Activated CD4-positive, alpha-beta memory T cell treated with anti-CD3 and anti-CD28 coated beads, Interleukin-2, amount 10 ng/mL, durations not matched to agents 7 days and 5 days (primary cell): ENCODE measurements at regions of chr6 and their contacts with region 1.

Region 1: GRCh38 chr6:25138237-25139125 is 140.7 kb upstream of the CARMIL1 start:
- DNase-seq: peak; percentile 81
- H3K4me3 Mint-ChIP-seq: peak overlapping the region; percentile 83
- H3K27ac Mint-ChIP-seq: peak overlapping the region; percentile 96
- H3K4me1 Mint-ChIP-seq: peaks cover 38% of the 10 kb centered on the region
- H3K27me3 Mint-ChIP-seq: no peaks in the 10 kb centered on the region

Region 2: GRCh38 chr6:25035527-25036435 is 102.7 kb before region 1 on chr6:
- CTCF ChIA-PET with region 1: no interaction called
- POLR2A ChIA-PET with region 1: interaction called, 13 read pairs
- DNase-seq: peak; percentile 45
- H3K4me3 Mint-ChIP-seq: peak overlapping the region; percentile 95
- H3K27ac Mint-ChIP-seq: peak overlapping the region; percentile 95
- H3K4me1 Mint-ChIP-seq: peaks cover 69% of the 10 kb centered on the region
- H3K27me3 Mint-ChIP-seq: no peaks in the 10 kb centered on the region

Region 3: DNA sequence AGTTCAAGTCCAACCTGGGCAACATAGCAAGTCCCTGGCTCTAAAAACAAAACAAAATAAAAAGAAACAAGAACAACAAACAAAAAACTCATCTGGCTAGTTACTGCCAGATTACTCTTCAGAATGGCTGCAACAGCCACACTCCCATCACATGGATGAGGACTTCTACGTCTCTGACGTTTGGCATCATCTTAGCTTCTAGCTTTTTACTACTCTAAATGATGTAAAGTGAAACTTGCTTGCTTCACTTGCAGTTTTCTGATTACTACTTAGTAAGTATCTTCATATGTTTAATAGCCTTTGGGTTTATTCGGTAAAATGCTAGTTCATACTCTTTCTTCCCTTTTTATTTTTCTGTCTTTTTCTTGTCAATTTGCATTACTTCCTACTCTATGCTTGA is 20.4 kb before region 1 on chr6:
- CTCF ChIA-PET with region 1: no interaction called
- POLR2A ChIA-PET with region 1: interaction called, 14 read pairs
- DNase-seq: no peak
- H3K4me3 Mint-ChIP-seq: no peak overlapping the region
- H3K27ac Mint-ChIP-seq: peak overlapping the region; percentile 10
- H3K4me1 Mint-ChIP-seq: peaks cover 57% of the 10 kb centered on the region
- H3K27me3 Mint-ChIP-seq: no peaks in the 10 kb centered on the region

Region 4: DNA sequence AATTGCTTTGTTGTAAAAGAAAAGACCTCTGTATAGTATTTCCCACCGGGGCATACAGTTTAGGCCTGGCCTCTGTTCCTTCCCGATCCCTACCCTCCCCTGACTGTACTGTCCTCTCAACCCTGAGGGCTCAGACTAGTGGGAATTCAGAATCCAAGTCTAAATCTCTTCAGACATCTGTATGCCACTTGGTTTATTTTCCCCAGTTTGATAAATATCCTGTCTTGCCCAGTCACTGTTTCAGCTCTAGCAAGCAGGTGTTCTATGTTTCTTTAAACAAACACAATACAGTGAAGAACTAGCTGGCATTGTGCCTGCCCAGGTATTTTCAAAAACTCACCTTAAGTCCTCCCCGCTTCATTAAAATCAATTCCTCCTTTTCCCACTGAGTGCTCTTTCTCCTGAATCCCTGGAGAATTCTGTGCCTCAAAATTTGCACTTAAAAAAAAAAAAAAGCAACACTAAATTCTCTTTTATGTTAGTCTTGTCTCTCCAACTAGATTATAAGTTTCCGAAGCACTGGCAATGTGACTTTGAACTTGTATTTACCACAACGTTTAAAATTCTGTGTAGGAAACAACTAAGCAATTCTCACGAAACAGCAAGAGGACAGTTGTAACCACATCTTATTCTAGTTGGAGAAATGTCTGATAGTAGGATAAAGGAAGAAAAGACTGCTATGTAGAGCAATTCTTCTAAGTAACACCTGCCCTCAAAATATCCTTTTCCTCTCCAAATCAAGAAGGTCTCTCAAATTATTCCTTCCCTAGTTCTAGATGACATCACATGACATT is 28.7 kb after region 1 on chr6:
- CTCF ChIA-PET with region 1: no interaction called
- POLR2A ChIA-PET with region 1: interaction called, 18 read pairs
- DNase-seq: no peak
- H3K4me3 Mint-ChIP-seq: peak overlapping the region; percentile 55
- H3K27ac Mint-ChIP-seq: peak overlapping the region; percentile 75
- H3K4me1 Mint-ChIP-seq: peaks cover 58% of the 10 kb centered on the region
- H3K27me3 Mint-ChIP-seq: no peaks in the 10 kb centered on the region

Region 5: DNA sequence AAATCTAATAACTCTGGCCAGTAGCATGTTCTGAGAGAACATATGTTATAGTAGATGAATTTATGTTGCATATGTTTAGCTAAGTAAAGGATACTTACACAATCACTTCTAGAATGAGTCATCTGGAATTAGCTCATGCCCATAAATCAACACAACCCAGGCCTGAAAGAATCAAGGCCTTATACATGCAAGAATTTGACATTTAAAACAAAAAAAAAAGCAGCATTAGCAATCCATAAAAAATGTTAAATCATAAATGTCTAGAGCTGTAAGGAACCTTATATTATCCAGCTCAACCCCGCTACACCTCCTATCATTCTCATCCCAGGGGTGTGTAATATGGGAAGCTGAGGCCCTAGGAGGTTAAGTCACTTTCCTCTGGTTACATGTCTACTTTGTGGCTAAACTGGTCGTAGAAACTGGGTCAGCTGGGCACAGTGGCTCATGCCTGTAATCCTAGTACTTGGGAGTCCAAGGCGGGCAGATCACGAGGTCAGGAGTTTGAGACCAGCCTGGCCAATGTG is 35.5 kb after region 1 on chr6:
- CTCF ChIA-PET with region 1: no interaction called
- POLR2A ChIA-PET with region 1: interaction called, 38 read pairs
- DNase-seq: no peak
- H3K4me3 Mint-ChIP-seq: no peak overlapping the region
- H3K27ac Mint-ChIP-seq: no peak overlapping the region
- H3K4me1 Mint-ChIP-seq: peaks cover 71% of the 10 kb centered on the region
- H3K27me3 Mint-ChIP-seq: no peaks in the 10 kb centered on the region

Region 6: GRCh38 chr6:25179051-25179778 is 40.7 kb after region 1 on chr6:
- CTCF ChIA-PET with region 1: interaction called, 3 read pairs
- POLR2A ChIA-PET with region 1: interaction called, 38 read pairs
- DNase-seq: no peak
- H3K4me3 Mint-ChIP-seq: no peak overlapping the region
- H3K27ac Mint-ChIP-seq: peak overlapping the region; percentile 63
- H3K4me1 Mint-ChIP-seq: peaks cover 70% of the 10 kb centered on the region
- H3K27me3 Mint-ChIP-seq: no peaks in the 10 kb centered on the region